Activated CD8-positive, alpha-beta T cell treated with anti-CD3 and anti-CD28 coated beads, Interleukin-2, amount 10 ng/mL, durations not matched to agents 7 days and 5 days (primary cell): ENCODE measurements at regions of chr12 and their contacts with region 1.

Region 1: GRCh38 chr12:9673404-9674225 is 4.1 kb downstream of the CLEC2D start:
- DNase-seq: peak; percentile 81
- ATAC-seq: peak; percentile 29
- H3K4me3 Mint-ChIP-seq: peak overlapping the region; percentile 86
- H3K27ac Mint-ChIP-seq: peak overlapping the region; percentile 97
- H3K4me1 Mint-ChIP-seq: peaks cover 56% of the 10 kb centered on the region
- H3K27me3 Mint-ChIP-seq: no peaks in the 10 kb centered on the region

Region 2: GRCh38 chr12:9647825-9648700 is 25.6 kb before region 1 on chr12:
- CTCF ChIA-PET with region 1: interaction called, 18 read pairs
- POLR2A ChIA-PET with region 1: interaction called, 432 read pairs
- DNase-seq: peak; percentile 97
- ATAC-seq: peak; percentile 83
- H3K4me3 Mint-ChIP-seq: peak overlapping the region; percentile 88
- H3K27ac Mint-ChIP-seq: peak overlapping the region; percentile 100
- H3K4me1 Mint-ChIP-seq: peaks cover 56% of the 10 kb centered on the region
- H3K27me3 Mint-ChIP-seq: peaks cover 2% of the 10 kb centered on the region

Region 3: DNA sequence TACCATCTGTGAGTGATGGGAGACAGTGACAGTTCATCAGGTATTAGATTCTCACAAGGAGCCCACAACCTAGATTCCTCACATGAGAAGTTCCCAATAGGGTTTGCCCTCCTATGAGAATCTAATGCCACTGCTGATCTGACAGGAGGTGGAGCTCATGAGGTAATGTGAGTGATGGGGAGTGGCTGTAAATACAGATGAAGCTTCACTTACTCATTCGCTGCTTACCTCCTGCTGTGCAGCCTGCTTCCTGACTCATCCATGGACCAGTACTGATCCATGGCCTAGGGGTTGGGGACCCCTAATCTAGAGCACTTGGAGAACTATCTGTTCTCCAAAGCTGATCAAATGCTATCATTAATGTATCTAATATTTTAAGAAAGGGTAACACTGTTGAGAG is 13.6 kb after region 1 on chr12:
- CTCF ChIA-PET with region 1: interaction called, 15 read pairs
- POLR2A ChIA-PET with region 1: interaction called, 18 read pairs
- DNase-seq: no peak
- ATAC-seq: no peak
- H3K4me3 Mint-ChIP-seq: no peak overlapping the region
- H3K27ac Mint-ChIP-seq: peak overlapping the region; percentile 46
- H3K4me1 Mint-ChIP-seq: peaks cover 75% of the 10 kb centered on the region
- H3K27me3 Mint-ChIP-seq: no peaks in the 10 kb centered on the region

Region 4: GRCh38 chr12:9869307-9870161 is 195.9 kb after region 1 on chr12 and contains the start of gene CLEC2B:
- CTCF ChIA-PET with region 1: no interaction called
- POLR2A ChIA-PET with region 1: interaction called, 22 read pairs
- DNase-seq: peak; percentile 58
- ATAC-seq: peak; percentile 55
- H3K4me3 Mint-ChIP-seq: peak within 1 kb of the TSS; percentile 79
- H3K27ac Mint-ChIP-seq: peak within 1 kb of the TSS; percentile 91
- H3K4me1 Mint-ChIP-seq: peaks cover 22% of the 10 kb centered on the region
- H3K27me3 Mint-ChIP-seq: no peaks in the 10 kb centered on the region
- total RNA-seq, gene CLEC2B: 55.2 to 58.8 TPM